Calu3 (cell line): ENCODE measurements at regions of chr1 and their contacts with region 1.

Region 1: DNA sequence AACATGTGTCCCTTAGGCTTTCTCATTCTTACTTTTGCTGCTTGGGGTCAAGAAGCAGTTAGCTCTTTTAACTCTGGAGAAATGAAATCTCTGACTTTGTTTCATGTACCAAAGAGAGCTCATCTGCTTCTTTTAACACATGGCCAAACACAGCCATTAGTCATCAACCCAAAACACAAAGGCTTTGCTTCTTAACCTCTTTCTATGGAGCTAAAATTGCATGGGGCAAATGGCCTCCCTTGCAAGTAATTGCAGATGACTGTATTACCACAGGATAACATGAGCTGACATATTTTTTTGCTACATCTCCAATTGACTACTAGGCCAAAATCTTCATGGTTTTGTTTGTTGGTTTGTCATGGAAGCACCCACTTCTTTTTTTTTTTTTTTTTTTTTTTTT is 300.9 kb downstream of the BRINP3 start:
- DNase-seq: no peak
- H3K4me3 Mint-ChIP-seq: no peak overlapping the region
- H3K27ac Mint-ChIP-seq: no peak overlapping the region
- H3K4me1 Mint-ChIP-seq: peaks cover 8% of the 10 kb centered on the region
- H3K27me3 Mint-ChIP-seq: no peaks in the 10 kb centered on the region
- CTCF ChIP-seq: no peak

Region 2: GRCh38 chr1:189429610-189430009 is 747.2 kb before region 1 on chr1:
- CTCF ChIA-PET with region 1: no interaction called
- intact Hi-C with region 1: no loop called
- DNase-seq: peak; percentile 54
- H3K4me3 Mint-ChIP-seq: no peak overlapping the region
- H3K27ac Mint-ChIP-seq: no peak overlapping the region
- H3K4me1 Mint-ChIP-seq: peaks cover 13% of the 10 kb centered on the region
- H3K27me3 Mint-ChIP-seq: no peaks in the 10 kb centered on the region
- CTCF ChIP-seq: peak; percentile 86

Region 3: GRCh38 chr1:189983166-189983890 is 193.4 kb before region 1 on chr1:
- CTCF ChIA-PET with region 1: interaction called, 11 read pairs
- intact Hi-C with region 1: no loop called
- DNase-seq: no peak
- H3K4me3 Mint-ChIP-seq: no peak overlapping the region
- H3K27ac Mint-ChIP-seq: no peak overlapping the region
- H3K4me1 Mint-ChIP-seq: peaks cover 37% of the 10 kb centered on the region
- H3K27me3 Mint-ChIP-seq: no peaks in the 10 kb centered on the region
- CTCF ChIP-seq: no peak

Region 4: GRCh38 chr1:190344454-190344853 is 167.7 kb after region 1 on chr1:
- CTCF ChIA-PET with region 1: no interaction called
- intact Hi-C with region 1: no loop called
- DNase-seq: no peak
- H3K4me3 Mint-ChIP-seq: no peak overlapping the region
- H3K27ac Mint-ChIP-seq: no peak overlapping the region
- H3K4me1 Mint-ChIP-seq: no peaks in the 10 kb centered on the region
- H3K27me3 Mint-ChIP-seq: no peaks in the 10 kb centered on the region
- CTCF ChIP-seq: no peak